ENCODE measurements at regions of chr1 and their contacts with region 1.

Region 1: GRCh38 chr1:180515864-180516388 is 13.5 kb upstream of the ACBD6 start:
- DNase-seq: peak; percentile 72
- H3K4me3 ChIP-seq: no peak overlapping the region
- H3K27ac ChIP-seq: peak overlapping the region; percentile 71
- H3K27me3 ChIP-seq: no peaks in the 10 kb centered on the region
- CTCF ChIP-seq: peak; percentile 81

Region 2: DNA sequence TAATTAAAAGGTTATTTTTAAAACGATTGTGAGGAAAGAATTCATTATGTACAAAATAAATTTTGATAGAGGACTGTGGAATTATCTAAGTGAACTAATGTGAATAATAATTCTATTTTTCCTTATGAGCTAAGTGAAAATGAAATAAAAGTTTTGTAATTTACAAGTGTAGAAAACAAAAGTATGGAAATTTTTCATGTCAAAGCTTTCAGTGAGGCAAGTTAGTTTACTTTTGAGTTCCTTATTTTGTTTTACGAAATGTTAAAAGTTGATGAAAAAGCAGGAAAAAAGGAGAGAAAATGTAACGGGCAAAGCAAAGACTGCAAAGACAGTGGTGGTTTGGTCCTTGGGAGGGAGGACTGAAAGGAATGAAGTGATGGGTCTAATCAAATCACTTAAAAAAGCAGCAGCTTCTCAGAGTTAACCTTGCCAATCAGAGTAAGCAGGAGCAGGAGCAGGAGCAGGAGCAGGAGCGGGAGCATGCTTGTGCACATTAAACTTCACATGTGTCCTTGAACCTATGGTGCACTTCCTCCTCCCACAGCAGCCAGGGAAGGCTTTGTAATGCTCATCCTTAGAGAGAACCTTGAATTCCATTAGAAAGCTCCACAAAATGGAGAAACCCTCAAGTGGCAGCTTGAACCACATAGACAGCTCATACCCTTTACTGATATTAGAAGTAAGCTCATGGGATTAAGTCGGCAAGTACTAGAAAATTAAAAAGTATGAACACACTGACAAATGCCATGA is 152.5 kb before region 1 on chr1:
- CTCF ChIA-PET with region 1: interaction called, 10 read pairs
- POLR2A ChIA-PET with region 1: no interaction called
- DNase-seq: no peak
- H3K4me3 ChIP-seq: no peak overlapping the region
- H3K27ac ChIP-seq: no peak overlapping the region
- H3K27me3 ChIP-seq: no peaks in the 10 kb centered on the region
- CTCF ChIP-seq: no peak

Region 3: GRCh38 chr1:180527101-180527669 is 11.3 kb after region 1 on chr1:
- CTCF ChIA-PET with region 1: interaction called, 37 read pairs
- POLR2A ChIA-PET with region 1: interaction called, 6 read pairs
- DNase-seq: no peak
- H3K4me3 ChIP-seq: no peak overlapping the region
- H3K27ac ChIP-seq: no peak overlapping the region
- H3K27me3 ChIP-seq: no peaks in the 10 kb centered on the region
- CTCF ChIP-seq: no peak

Region 4: DNA sequence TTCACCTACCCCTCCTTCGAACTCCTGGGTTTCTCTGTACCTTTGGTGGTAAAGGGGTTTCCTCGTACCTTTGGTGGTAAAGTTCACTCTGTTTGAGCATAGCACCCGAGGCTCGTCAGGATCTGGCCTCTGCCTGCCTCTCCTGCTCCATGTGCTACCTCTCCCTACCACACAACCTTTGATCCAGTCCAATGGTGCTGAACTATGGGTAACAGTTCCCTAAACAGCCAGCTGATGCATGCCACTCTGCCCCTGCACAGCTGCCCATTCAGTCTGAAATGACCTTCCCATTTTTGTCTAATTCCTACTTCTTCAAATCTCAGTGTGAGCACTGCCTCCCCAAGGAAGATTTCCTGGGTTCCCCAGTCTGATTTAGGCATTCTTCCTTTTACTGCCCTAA is 56.8 kb after region 1 on chr1:
- CTCF ChIA-PET with region 1: interaction called, 10 read pairs
- POLR2A ChIA-PET with region 1: no interaction called
- DNase-seq: no peak
- H3K4me3 ChIP-seq: no peak overlapping the region
- H3K27ac ChIP-seq: no peak overlapping the region
- H3K27me3 ChIP-seq: no peaks in the 10 kb centered on the region
- CTCF ChIP-seq: no peak

Region 5: DNA sequence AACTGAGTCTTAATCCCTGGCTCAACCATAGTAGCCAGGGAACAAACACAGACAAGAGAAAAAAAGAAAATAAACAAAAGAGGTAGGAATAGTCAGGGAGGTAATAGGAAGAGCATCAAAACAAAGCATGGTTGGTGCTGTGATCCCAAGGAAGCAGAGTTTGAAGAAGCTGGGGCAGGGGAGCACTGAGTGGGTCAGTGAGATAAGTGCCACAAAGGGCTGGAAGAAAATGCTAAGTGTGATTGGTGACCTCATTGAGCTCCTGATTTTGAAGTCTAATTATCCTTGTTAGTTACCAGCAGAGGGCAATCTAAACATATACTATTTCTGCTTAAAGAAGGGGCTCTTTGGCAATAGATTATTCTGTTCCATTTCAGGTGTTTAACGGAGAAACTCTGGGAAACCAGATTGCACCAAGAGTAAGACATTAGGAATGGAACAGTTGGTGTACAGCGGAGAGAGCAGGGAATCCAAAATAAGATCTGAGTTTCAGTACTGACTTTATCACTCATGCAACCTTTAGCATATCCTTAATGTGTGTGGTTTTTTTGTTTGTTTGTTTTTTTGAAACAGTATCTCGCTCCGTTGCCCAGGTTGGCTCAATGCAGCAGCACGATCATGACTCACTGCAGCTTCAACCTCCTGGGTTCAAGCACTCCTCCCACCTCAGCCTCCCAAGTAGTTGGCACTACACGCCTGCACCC is 366.0 kb after region 1 on chr1:
- CTCF ChIA-PET with region 1: interaction called, 12 read pairs
- POLR2A ChIA-PET with region 1: no interaction called
- DNase-seq: no peak
- H3K4me3 ChIP-seq: no peak overlapping the region
- H3K27ac ChIP-seq: no peak overlapping the region
- H3K27me3 ChIP-seq: no peaks in the 10 kb centered on the region
- CTCF ChIP-seq: peak; percentile 60

Measured in AG04450 (cell line).